ENCODE measurements at regions of chr9 and their contacts with region 1.

Region 1: DNA sequence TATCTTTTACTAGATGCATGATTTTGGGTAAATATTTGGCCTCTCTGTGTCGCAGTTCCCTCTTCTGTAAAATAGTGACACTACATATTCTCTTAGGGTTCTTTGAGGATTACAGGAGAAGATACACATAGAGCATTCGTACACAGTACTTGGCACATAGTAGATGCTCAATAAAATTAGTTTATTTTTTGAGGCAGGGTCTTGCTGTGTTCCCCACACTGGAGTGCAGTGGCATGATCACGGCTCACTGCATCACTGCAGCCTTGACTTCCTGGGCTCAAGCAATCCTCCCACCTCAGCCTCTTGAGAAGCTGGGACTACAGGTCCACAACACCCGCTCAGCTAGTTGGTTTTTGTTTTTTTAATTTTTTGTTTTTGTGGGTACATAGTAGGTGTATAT is 1.6 kb downstream of the SCAI start:
- DNase-seq: no peak
- H3K27ac ChIP-seq: no peak overlapping the region
- CTCF ChIP-seq: no peak

Region 2: DNA sequence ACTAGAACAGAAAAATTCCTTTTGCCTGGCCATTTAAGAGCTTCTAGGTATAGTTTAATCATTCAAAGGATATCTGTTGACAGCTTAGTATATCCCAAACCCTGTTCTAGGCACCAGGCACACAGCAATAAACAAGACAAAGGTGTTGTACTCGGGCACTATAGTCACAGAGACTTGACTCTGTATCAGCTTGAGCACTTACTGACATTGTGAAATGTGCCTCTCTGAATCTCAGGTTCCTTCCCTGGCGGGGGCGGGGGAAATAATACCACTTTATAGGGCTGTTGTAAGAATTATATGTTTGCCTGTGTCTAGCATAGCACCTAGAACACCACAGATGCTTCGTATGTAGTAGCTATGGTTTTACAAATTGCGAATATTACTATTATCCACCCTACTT is 475.1 kb before region 1 on chr9:
- CTCF ChIA-PET with region 1: no interaction called
- POLR2A ChIA-PET with region 1: interaction called, 11 read pairs
- DNase-seq: no peak
- H3K27ac ChIP-seq: no peak overlapping the region
- CTCF ChIP-seq: no peak

Measured in RWPE1 (cell line).